Activated T-helper 1 cell treated with anti-CD3 and anti-CD28 coated beads, Interleukin-12 subunit alpha, Interleukin-12 subunit beta, Interleukin-2, Interleukin-4 antibody, amounts not matched to agents 30 ng/mL and 10 ng/mL and 1 ng/mL, durations not matched to agents 14 hours and 24 hours and 36 hours (primary cell): ENCODE measurements at regions of chr3 and their contacts with region 1.

Region 1: GRCh38 chr3:118984699-118985098 is 49.9 kb downstream of the IGSF11 start:
- DNase-seq: no peak
- H3K4me3 Mint-ChIP-seq: no peak overlapping the region
- H3K27ac Mint-ChIP-seq: no peak overlapping the region
- H3K4me1 Mint-ChIP-seq: peaks cover 13% of the 10 kb centered on the region
- H3K27me3 Mint-ChIP-seq: peaks cover 4% of the 10 kb centered on the region

Region 2: GRCh38 chr3:118544458-118544857 is 440.2 kb before region 1 on chr3:
- intact Hi-C with region 1: no loop called
- DNase-seq: no peak
- H3K4me3 Mint-ChIP-seq: no peak overlapping the region
- H3K27ac Mint-ChIP-seq: no peak overlapping the region
- H3K4me1 Mint-ChIP-seq: no peaks in the 10 kb centered on the region
- H3K27me3 Mint-ChIP-seq: no peaks in the 10 kb centered on the region

Region 3: DNA sequence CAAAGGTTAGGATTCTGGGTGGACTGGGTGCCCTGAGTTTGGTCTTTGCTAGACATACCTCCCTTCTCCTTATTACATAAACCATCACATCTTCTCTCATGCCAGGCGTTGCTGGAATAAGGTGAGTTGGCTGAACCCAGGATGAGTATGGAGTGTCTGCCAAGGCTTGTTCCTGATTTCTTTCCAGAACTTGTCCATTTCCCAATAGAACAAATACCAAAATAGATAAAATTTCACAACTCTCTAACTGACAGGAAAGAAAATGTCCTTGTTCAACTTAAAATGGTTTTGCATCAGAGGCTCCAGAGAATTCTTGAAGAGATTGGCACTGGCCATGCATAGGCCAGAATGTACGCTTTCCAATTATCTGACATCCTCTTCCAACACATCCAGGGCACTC is 241.9 kb before region 1 on chr3:
- intact Hi-C with region 1: no loop called
- DNase-seq: no peak
- H3K4me3 Mint-ChIP-seq: no peak overlapping the region
- H3K27ac Mint-ChIP-seq: no peak overlapping the region
- H3K4me1 Mint-ChIP-seq: no peaks in the 10 kb centered on the region
- H3K27me3 Mint-ChIP-seq: no peaks in the 10 kb centered on the region

Region 4: DNA sequence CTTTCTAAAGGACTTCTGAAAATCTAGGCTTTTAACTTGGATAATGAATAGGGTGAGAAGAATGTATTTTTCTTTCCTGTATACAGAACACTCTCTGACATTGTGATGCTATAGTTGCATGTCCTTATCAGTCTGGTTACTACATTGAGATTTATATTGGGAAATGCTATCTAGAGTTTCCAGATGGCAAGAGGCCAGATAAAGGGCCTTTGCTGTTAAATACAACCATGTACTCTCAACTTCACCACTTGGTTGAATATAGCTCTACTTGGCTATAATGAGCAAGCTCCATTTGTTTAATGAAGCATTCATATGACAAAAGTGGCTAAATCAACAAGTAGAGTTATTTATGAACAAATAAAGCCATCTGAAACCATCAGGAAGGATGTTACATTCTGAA is 41.1 kb before region 1 on chr3:
- intact Hi-C with region 1: loop called (anchors 5 kb)
- DNase-seq: no peak
- H3K4me3 Mint-ChIP-seq: no peak overlapping the region
- H3K27ac Mint-ChIP-seq: no peak overlapping the region
- H3K4me1 Mint-ChIP-seq: peaks cover 19% of the 10 kb centered on the region
- H3K27me3 Mint-ChIP-seq: peaks cover 3% of the 10 kb centered on the region

Region 5: GRCh38 chr3:118960876-118961450 is 23.7 kb before region 1 on chr3:
- intact Hi-C with region 1: loop called (anchors 1 kb)
- DNase-seq: no peak
- H3K4me3 Mint-ChIP-seq: no peak overlapping the region
- H3K27ac Mint-ChIP-seq: no peak overlapping the region
- H3K4me1 Mint-ChIP-seq: peaks cover 12% of the 10 kb centered on the region
- H3K27me3 Mint-ChIP-seq: no peaks in the 10 kb centered on the region